Heart right ventricle (tissue), 16 donors: ENCODE measurements at regions of chr6 and their contacts with region 1.

Region 1: DNA sequence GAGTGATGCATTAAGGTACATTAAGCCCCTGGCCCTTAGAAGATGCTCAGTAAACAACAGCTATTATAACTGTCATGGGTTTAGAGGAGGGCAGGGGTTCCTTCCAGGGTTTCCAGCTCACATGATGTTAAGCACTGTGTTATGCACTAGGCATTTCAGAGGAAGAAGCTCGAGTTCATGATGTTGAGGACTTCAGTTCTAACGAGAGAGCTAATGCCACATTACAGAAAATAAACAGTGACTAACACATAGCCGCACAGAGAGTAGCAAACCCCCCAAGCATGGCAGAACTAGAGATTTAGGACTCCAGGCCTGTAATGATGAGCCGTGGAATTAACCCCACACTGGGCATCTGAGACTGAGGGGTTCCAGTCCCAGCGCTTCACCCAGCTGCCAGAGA is 105.2 kb downstream of the UNC5CL start:
- DNase-seq: no peak
- ATAC-seq: no peak
- H3K4me3 ChIP-seq: no peak overlapping the region
- H3K27ac ChIP-seq: no peak overlapping the region
- H3K4me1 ChIP-seq: peaks cover 0 to 29% (median 4%) of the 10 kb centered on the region in 9 donors
- H3K27me3 ChIP-seq: no peaks in the 10 kb centered on the region
- CTCF ChIP-seq: no peak

Region 2: GRCh38 chr6:40968620-40969164 is 34.8 kb after region 1 on chr6:
- intact Hi-C with region 1: loop called in 1 of 10 experiments (anchors 2 kb)
- DNase-seq: no peak
- ATAC-seq: no peak
- H3K4me3 ChIP-seq: no peak overlapping the region
- H3K27ac ChIP-seq: no peak overlapping the region
- H3K4me1 ChIP-seq: no peaks in the 10 kb centered on the region
- H3K27me3 ChIP-seq: no peaks in the 10 kb centered on the region
- CTCF ChIP-seq: no peak